Activated CD8-positive, alpha-beta T cell treated with anti-CD3 and anti-CD28 coated beads, Interleukin-2, amount 10 ng/mL, durations not matched to agents 7 days and 5 days (primary cell): ENCODE measurements at regions of chr2 and their contacts with region 1.

Region 1: GRCh38 chr2:71299507-71299906 is 32.1 kb upstream of the ZNF638 start:
- DNase-seq: no peak
- ATAC-seq: no peak
- H3K4me3 Mint-ChIP-seq: no peak overlapping the region
- H3K27ac Mint-ChIP-seq: no peak overlapping the region
- H3K4me1 Mint-ChIP-seq: no peaks in the 10 kb centered on the region
- H3K27me3 Mint-ChIP-seq: peaks cover 8% of the 10 kb centered on the region

Region 2: DNA sequence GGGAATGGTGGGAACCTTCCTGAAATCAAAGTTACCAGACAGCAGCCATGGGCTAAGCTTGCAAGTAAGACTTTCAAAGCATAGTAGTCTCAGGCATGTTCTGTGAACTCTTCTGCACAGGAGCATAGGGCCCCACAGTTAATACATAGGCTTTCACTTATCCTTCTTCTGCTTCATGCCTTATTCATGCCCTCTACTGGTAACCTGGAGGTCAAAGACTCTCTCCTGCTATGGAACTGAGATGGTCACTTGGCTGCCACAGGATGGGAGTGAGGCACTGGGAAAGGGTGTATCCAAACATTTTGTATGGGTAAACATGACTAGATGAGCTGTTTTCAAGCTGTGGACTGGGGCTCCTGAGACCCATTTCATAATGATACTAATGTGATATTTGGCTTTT is 17.0 kb before region 1 on chr2:
- CTCF ChIA-PET with region 1: interaction called, 10 read pairs
- POLR2A ChIA-PET with region 1: no interaction called
- DNase-seq: no peak
- ATAC-seq: no peak
- H3K4me3 Mint-ChIP-seq: no peak overlapping the region
- H3K27ac Mint-ChIP-seq: no peak overlapping the region
- H3K4me1 Mint-ChIP-seq: peaks cover 6% of the 10 kb centered on the region
- H3K27me3 Mint-ChIP-seq: peaks cover 47% of the 10 kb centered on the region

Region 3: DNA sequence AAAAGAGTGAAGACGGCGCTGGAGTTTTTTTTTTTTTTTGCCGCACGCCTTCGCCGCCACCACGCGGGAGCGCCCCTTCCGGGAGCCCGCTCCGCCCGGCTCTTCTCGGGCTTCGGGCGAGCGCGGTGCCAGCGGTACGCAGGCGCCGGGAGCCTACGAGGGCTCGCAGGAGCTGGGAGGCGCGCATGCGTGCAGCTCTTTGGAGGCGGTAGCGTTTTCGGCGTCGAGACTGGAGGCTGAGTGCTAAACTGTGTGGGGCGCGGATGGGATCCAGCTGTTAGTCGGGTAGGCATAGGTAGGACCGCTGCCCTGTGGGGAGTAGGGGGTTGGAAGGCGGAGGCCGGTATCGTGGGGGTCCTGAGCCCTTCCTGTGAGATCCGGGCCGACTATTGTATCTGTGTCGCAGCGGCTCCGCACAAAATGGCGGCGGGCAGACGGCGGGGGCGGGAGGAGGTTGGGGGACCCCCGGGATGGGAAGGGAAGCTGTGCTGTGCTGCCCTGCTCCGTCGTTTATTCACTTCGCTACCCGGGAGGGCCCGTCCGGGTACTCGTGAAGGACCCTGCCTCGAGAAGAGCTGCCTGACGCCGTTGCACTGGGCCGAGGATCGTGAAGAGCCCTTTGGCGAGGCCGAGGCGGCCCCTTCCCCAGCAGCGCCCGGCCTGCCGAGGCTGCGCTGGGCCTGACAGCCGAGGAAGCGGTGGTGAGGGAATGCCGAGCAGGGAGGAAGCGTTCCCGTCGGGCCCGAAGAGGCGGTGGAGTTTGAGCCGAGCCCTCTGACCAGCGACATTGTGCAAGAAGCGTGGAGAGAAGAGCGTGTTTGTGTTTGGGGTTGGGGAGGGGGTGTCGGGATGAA is 32.3 kb after region 1 on chr2 and contains the start of gene ZNF638:
- CTCF ChIA-PET with region 1: interaction called, 45 read pairs
- POLR2A ChIA-PET with region 1: no interaction called
- DNase-seq: peak; percentile 93
- ATAC-seq: peak; percentile 99
- H3K4me3 Mint-ChIP-seq: peak within 1 kb of the TSS; percentile 96
- H3K27ac Mint-ChIP-seq: peak within 1 kb of the TSS; percentile 100
- H3K4me1 Mint-ChIP-seq: peaks cover 25% of the 10 kb centered on the region
- H3K27me3 Mint-ChIP-seq: peaks cover 5% of the 10 kb centered on the region
- total RNA-seq, gene ZNF638: 69.7 to 74.0 TPM

Region 4: GRCh38 chr2:71505086-71505769 is 205.7 kb after region 1 on chr2:
- CTCF ChIA-PET with region 1: interaction called, 104 read pairs
- POLR2A ChIA-PET with region 1: no interaction called
- DNase-seq: no peak
- ATAC-seq: no peak
- H3K4me3 Mint-ChIP-seq: no peak overlapping the region
- H3K27ac Mint-ChIP-seq: no peak overlapping the region
- H3K4me1 Mint-ChIP-seq: no peaks in the 10 kb centered on the region
- H3K27me3 Mint-ChIP-seq: no peaks in the 10 kb centered on the region

Region 5: GRCh38 chr2:71510196-71510807 is 210.8 kb after region 1 on chr2:
- CTCF ChIA-PET with region 1: interaction called, 104 read pairs
- POLR2A ChIA-PET with region 1: no interaction called
- DNase-seq: peak; percentile 76
- ATAC-seq: peak; percentile 77
- H3K4me3 Mint-ChIP-seq: no peak overlapping the region
- H3K27ac Mint-ChIP-seq: no peak overlapping the region
- H3K4me1 Mint-ChIP-seq: no peaks in the 10 kb centered on the region
- H3K27me3 Mint-ChIP-seq: no peaks in the 10 kb centered on the region

Region 6: DNA sequence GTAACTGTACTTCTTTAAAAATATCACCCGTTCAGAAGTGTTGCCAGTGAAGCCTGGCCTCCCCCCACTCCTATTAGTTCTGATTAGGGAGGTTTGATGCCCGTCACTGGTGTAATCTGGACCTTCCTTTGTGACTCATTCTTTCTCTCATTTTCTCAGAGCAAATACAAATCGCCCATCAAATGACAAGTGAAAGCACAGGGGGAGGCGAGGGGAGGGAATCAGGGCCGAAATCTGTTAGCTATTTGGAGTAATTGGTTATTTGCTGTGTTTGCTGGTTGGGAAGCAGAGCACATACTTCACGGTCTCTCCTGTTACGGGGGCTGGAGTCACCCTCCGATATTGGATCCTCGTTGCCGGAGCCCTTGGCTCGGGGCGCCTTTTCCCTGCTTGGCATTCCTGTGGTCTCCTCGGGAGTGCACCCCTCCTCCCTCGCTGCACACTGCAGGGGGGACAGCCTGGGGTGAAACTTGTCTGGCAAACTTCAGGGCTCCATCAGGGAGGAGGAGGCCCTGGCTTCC is 332.0 kb after region 1 on chr2:
- CTCF ChIA-PET with region 1: no interaction called
- POLR2A ChIA-PET with region 1: no interaction called
- DNase-seq: no peak
- ATAC-seq: no peak
- H3K4me3 Mint-ChIP-seq: no peak overlapping the region
- H3K27ac Mint-ChIP-seq: no peak overlapping the region
- H3K4me1 Mint-ChIP-seq: no peaks in the 10 kb centered on the region
- H3K27me3 Mint-ChIP-seq: peaks cover 10% of the 10 kb centered on the region

Region 7: GRCh38 chr2:71798266-71799012 is 498.9 kb after region 1 on chr2:
- CTCF ChIA-PET with region 1: no interaction called
- POLR2A ChIA-PET with region 1: no interaction called
- DNase-seq: peak; percentile 30
- ATAC-seq: no peak
- H3K4me3 Mint-ChIP-seq: no peak overlapping the region
- H3K27ac Mint-ChIP-seq: no peak overlapping the region
- H3K4me1 Mint-ChIP-seq: no peaks in the 10 kb centered on the region
- H3K27me3 Mint-ChIP-seq: no peaks in the 10 kb centered on the region